Activated CD4-positive, alpha-beta T cell treated with anti-CD3 and anti-CD28 coated beads, Interleukin-2, amount 10 ng/mL, durations not matched to agents 24 days and 14 days (primary cell): ENCODE measurements at regions of chr12 and their contacts with region 1.

Region 1: GRCh38 chr12:81450920-81451739 is 308.0 kb downstream of the PPFIA2 start:
- DNase-seq: no peak
- H3K4me3 Mint-ChIP-seq: no peak overlapping the region
- H3K27ac Mint-ChIP-seq: no peak overlapping the region
- H3K4me1 Mint-ChIP-seq: no peaks in the 10 kb centered on the region
- H3K27me3 Mint-ChIP-seq: no peaks in the 10 kb centered on the region

Region 2: GRCh38 chr12:81627336-81628189 is 176.4 kb after region 1 on chr12:
- intact Hi-C with region 1: loop called (anchors 5 kb)
- DNase-seq: no peak
- H3K4me3 Mint-ChIP-seq: no peak overlapping the region
- H3K27ac Mint-ChIP-seq: no peak overlapping the region
- H3K4me1 Mint-ChIP-seq: no peaks in the 10 kb centered on the region
- H3K27me3 Mint-ChIP-seq: no peaks in the 10 kb centered on the region